Activated CD4-positive, alpha-beta memory T cell treated with anti-CD3 and anti-CD28 coated beads for 36 hours (primary cell): ENCODE measurements at regions of chr12 and their contacts with region 1.

Region 1: DNA sequence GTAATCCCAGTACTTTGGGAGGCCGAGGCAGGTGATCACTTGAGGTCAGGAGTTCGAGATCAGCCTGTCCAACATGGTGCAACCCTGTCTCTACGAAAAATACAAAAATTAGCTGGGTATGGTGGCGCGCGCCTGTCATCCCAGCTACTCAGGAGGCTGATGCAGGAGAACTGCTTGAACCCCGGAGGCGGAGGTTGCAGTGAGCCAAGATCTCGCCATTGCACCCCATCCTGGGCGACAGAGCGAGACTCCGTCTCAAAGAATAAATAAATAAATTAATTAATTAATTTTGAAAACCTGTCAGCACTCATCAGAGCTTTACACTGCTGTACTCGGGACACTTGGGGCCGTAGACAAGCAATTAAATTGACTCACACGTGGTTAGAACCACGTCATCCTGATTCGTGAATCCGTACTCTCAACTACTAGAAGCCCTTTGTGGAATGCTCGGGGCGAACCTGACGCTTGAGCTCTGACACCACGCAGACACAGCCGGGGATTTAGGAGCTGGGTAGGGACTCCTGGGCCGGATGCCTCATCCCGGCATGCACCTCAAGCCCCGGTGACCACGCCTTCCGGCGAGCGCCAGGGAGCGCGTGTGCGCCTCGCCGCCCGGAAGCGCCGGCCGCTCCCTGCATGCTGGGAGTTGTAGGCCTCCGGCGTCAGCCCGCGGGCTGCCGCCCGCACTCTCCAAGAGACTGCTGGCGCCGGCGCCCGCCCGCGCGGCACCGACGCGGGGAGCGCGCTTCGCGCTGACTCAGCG is at the start of gene XPOT:
- DNase-seq: peak; percentile 96
- H3K4me3 Mint-ChIP-seq: peak within 1 kb of the TSS; percentile 97
- H3K27ac Mint-ChIP-seq: peak within 1 kb of the TSS; percentile 98
- H3K4me1 Mint-ChIP-seq: peaks cover 38% of the 10 kb centered on the region
- H3K27me3 Mint-ChIP-seq: no peaks in the 10 kb centered on the region
- total RNA-seq, gene XPOT: 145 to 153 TPM

Region 2: GRCh38 chr12:62466594-62467491 is 1937.0 kb before region 1 on chr12 and contains the start of gene MON2:
- CTCF ChIA-PET with region 1: no interaction called
- POLR2A ChIA-PET with region 1: no interaction called
- intact Hi-C with region 1: loop called (anchors 5 kb)
- DNase-seq: peak; percentile 90
- H3K4me3 Mint-ChIP-seq: peak within 1 kb of the TSS; percentile 93
- H3K27ac Mint-ChIP-seq: peak within 1 kb of the TSS; percentile 88
- H3K4me1 Mint-ChIP-seq: peaks cover 22% of the 10 kb centered on the region
- H3K27me3 Mint-ChIP-seq: no peaks in the 10 kb centered on the region
- total RNA-seq, gene MON2: 29.2 to 35.1 TPM

Region 3: DNA sequence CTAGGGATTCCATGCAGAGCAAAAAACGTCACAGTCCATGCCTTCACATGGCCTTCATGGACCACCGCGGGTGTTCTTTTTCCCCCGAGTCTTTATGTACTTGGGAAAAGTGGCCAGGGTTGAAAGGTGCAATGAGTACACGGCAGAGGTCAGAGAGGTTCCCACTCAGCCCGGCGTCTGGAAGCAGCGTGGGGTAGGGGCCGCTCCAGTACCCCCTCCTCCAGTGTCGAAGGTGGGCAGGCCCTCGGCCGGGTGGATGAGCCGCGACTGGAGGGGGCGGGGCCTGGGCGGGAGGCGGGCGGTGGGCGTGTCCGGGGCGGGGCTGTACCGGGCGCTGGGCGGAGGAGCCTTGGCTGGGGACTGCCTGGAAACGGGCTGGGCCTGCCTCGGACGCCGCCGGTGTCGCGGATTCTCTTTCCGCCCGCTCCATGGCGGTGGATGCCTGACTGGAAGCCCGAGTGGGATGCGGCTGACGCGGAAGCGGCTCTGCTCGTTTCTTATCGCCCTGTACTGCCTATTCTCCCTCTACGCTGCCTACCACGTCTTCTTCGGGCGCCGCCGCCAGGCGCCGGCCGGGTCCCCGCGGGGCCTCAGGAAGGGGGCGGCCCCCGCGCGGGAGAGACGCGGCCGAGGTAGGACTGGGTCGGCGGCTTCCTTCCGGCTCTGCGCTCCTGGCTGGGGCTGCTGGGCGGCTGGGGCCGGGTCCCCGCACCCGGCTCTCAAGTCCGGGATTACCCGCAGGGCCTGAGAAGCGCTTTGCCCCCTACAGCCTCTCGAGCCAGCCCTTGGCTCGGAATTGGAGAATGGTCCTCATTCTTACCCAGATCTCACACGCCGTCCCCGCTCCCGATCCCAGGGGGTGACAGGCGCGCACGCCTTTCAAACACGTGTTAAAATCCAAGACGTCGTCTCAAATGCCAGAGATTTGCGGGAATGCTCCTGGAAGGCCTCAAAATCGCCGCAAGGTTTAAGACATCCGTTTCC is 624.1 kb before region 1 on chr12 and contains the start of gene RXYLT1:
- CTCF ChIA-PET with region 1: no interaction called
- POLR2A ChIA-PET with region 1: no interaction called
- intact Hi-C with region 1: loop called (anchors 1 kb)
- DNase-seq: peak; percentile 90
- H3K4me3 Mint-ChIP-seq: peak within 1 kb of the TSS; percentile 93
- H3K27ac Mint-ChIP-seq: peak within 1 kb of the TSS; percentile 88
- H3K4me1 Mint-ChIP-seq: peaks cover 10% of the 10 kb centered on the region
- H3K27me3 Mint-ChIP-seq: no peaks in the 10 kb centered on the region
- total RNA-seq, gene RXYLT1: 14.0 to 14.3 TPM

Region 4: GRCh38 chr12:64042911-64043310 is 361.0 kb before region 1 on chr12:
- CTCF ChIA-PET with region 1: no interaction called
- POLR2A ChIA-PET with region 1: no interaction called
- intact Hi-C with region 1: no loop called
- DNase-seq: no peak
- H3K4me3 Mint-ChIP-seq: no peak overlapping the region
- H3K27ac Mint-ChIP-seq: no peak overlapping the region
- H3K4me1 Mint-ChIP-seq: no peaks in the 10 kb centered on the region
- H3K27me3 Mint-ChIP-seq: peaks cover 1% of the 10 kb centered on the region

Region 5: DNA sequence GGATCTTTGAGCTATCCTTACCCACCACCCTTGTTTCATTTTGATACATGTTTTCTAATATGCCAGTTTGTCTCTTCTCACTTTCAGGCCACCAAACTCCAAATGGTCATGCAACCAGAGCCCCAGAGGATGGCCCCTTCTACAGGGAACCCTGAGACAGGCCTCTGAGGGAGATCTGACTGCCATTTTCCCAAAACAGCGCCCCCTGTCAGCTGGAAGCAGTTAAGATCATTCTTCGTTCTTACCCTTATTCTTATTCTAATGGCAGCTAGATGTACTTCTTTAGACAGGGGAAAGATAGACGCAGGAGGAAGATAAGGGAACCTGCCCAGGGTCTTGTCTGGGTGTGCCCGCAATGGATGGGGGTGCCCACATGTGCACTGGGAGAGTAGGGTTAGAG is 51.7 kb before region 1 on chr12:
- CTCF ChIA-PET with region 1: no interaction called
- POLR2A ChIA-PET with region 1: no interaction called
- intact Hi-C with region 1: no loop called
- DNase-seq: no peak
- H3K4me3 Mint-ChIP-seq: no peak overlapping the region
- H3K27ac Mint-ChIP-seq: no peak overlapping the region
- H3K4me1 Mint-ChIP-seq: no peaks in the 10 kb centered on the region
- H3K27me3 Mint-ChIP-seq: no peaks in the 10 kb centered on the region

Region 6: DNA sequence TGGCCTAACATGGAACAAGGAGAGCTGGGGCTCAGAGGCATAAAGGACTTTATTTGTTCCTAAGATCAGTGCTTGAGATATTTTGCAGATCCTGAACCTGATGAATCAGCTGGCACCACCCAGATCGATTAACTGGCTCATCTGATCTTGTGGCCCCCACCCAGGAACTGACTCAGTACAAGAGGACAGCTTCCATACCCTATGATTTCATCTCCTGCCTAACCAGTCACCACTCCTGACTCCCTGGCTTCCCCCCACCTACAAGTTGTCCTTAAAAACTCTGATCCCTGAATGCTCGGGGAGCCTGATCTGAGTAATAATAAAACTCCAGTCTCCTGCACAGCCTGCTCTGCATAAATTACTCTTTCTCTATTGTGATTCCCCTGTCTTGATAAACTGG is 18.4 kb before region 1 on chr12:
- CTCF ChIA-PET with region 1: interaction called, 4 read pairs
- POLR2A ChIA-PET with region 1: interaction called, 3 read pairs
- intact Hi-C with region 1: loop called (anchors 1 kb)
- DNase-seq: peak; percentile 65
- H3K4me3 Mint-ChIP-seq: no peak overlapping the region
- H3K27ac Mint-ChIP-seq: peak overlapping the region; percentile 52
- H3K4me1 Mint-ChIP-seq: peaks cover 31% of the 10 kb centered on the region
- H3K27me3 Mint-ChIP-seq: no peaks in the 10 kb centered on the region

Region 7: DNA sequence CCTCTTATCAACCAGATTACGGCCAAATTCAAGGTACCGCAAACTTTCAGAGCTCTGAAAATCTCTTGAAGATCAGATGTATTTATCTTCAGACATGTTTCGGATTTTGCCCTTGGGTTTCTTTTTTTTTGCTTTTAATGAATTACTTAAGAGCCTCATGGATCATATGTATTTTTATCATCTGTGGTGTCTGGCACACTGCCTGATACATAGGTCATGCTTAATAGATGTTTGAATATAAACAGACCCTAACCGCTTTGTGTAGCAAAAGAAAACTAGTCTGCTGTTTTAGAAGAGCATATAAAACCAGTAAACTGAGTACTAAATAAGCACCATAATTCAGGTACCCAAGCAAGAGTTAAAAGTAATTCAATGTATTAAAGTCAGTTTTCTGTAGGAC is 27.9 kb after region 1 on chr12:
- CTCF ChIA-PET with region 1: no interaction called
- POLR2A ChIA-PET with region 1: no interaction called
- intact Hi-C with region 1: no loop called
- DNase-seq: no peak
- H3K4me3 Mint-ChIP-seq: no peak overlapping the region
- H3K27ac Mint-ChIP-seq: no peak overlapping the region
- H3K4me1 Mint-ChIP-seq: no peaks in the 10 kb centered on the region
- H3K27me3 Mint-ChIP-seq: no peaks in the 10 kb centered on the region

Region 8: GRCh38 chr12:64451687-64452558 is 48.0 kb after region 1 on chr12 and contains the start of gene TBK1:
- CTCF ChIA-PET with region 1: no interaction called
- POLR2A ChIA-PET with region 1: interaction called, 4 read pairs
- intact Hi-C with region 1: loop called (anchors 1 kb)
- DNase-seq: peak; percentile 77
- H3K4me3 Mint-ChIP-seq: peak within 1 kb of the TSS; percentile 96
- H3K27ac Mint-ChIP-seq: peak within 1 kb of the TSS; percentile 95
- H3K4me1 Mint-ChIP-seq: peaks cover 42% of the 10 kb centered on the region
- H3K27me3 Mint-ChIP-seq: no peaks in the 10 kb centered on the region
- total RNA-seq, gene TBK1: 21.7 to 23.4 TPM

Region 9: GRCh38 chr12:64610149-64610678 is 206.3 kb after region 1 on chr12 and contains the start of gene RASSF3:
- CTCF ChIA-PET with region 1: no interaction called
- POLR2A ChIA-PET with region 1: no interaction called
- intact Hi-C with region 1: loop called (anchors 2 kb)
- DNase-seq: peak; percentile 83
- H3K4me3 Mint-ChIP-seq: peak within 1 kb of the TSS; percentile 95
- H3K27ac Mint-ChIP-seq: peak within 1 kb of the TSS; percentile 98
- H3K4me1 Mint-ChIP-seq: peaks cover 37% of the 10 kb centered on the region
- H3K27me3 Mint-ChIP-seq: no peaks in the 10 kb centered on the region
- total RNA-seq, gene RASSF3: 40.6 to 40.7 TPM

Region 10: GRCh38 chr12:64759035-64759901 is 355.4 kb after region 1 on chr12 and contains the start of gene GNS:
- CTCF ChIA-PET with region 1: no interaction called
- POLR2A ChIA-PET with region 1: interaction called, 5 read pairs
- intact Hi-C with region 1: loop called (anchors 1 kb)
- DNase-seq: peak; percentile 97
- H3K4me3 Mint-ChIP-seq: peak within 1 kb of the TSS; percentile 85
- H3K27ac Mint-ChIP-seq: peak within 1 kb of the TSS; percentile 90
- H3K4me1 Mint-ChIP-seq: peaks cover 43% of the 10 kb centered on the region
- H3K27me3 Mint-ChIP-seq: no peaks in the 10 kb centered on the region
- total RNA-seq, gene GNS: 21.2 to 23.1 TPM